ENCODE measurements at regions of chr14 and their contacts with region 1.

Region 1: DNA sequence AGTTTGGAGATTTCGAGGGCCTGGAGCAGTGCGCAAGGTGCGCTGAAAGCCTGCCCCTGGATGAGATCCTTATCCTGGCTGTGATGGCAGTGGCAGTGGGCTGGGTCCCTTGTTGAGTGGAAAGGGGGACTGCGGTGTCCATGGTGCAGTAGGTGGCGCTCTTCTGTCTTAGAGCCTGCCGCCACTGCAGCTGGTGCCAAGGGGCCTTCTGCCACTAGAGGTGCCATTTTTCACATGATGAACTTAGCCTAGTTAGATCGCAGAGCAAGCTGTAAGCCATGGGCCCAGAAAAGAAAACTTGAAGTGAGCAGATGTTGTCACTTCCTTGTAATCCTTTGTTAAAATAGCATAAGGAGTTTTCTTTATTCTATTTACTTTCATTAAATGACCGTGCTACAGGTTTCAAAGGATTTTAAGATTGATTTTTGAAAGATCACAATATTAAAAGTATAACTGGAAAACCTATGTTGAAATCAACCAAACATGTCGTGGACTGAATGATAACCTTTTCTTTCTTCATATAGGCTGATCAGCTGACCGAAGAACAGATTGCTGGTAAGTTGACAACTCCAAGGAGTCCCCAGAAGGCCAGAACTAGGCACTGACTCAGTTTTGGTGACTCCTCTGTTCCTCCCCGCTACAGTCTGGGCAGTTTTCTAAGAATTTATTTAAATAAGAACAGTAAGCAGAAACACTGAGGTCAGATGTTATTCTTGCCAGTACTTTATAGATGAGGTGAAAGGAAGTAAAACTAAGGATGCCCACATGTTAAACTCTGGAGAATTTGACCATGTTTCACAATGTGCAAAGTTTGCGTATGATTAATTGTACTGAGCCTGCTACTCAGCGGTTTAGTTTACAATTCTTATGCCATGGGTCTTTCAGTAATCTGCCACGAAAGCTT is 3.0 kb downstream of the CALM1 start:
- DNase-seq: peak; percentile 94
- ATAC-seq: peak; percentile 75

Region 2: DNA sequence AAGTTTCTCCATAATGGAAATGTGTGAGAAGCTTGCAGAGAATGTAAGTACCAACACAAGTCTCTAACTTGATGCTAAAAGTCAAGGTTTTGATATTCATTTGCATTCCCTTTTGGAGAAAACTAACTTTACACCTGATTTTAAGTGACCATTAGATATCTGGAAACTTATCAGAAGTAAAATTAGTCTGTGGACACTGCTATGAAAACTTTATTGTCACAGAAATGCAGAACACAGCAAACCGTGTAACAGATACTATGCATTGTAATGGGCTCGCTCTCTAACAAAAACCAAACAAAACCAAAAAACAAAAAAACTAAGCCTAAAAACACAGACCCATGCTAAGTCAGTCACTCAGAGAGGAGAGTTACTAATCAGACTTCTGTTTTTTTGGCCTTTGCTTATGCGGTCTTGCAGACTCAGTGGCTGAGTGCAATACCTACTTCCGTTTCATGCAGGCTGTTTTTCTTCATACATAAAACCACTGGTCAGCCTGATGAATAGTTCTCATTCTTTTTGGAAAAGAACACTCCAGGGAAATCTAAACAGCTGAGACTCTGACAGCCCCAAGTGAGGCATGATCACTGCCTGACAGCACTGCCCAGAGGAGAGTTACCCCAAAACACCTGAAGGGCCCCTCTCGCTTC is 103.8 kb before region 1 on chr14:
- intact Hi-C with region 1: loop called (anchors 5 kb)
- DNase-seq: no peak
- ATAC-seq: no peak

Region 3: DNA sequence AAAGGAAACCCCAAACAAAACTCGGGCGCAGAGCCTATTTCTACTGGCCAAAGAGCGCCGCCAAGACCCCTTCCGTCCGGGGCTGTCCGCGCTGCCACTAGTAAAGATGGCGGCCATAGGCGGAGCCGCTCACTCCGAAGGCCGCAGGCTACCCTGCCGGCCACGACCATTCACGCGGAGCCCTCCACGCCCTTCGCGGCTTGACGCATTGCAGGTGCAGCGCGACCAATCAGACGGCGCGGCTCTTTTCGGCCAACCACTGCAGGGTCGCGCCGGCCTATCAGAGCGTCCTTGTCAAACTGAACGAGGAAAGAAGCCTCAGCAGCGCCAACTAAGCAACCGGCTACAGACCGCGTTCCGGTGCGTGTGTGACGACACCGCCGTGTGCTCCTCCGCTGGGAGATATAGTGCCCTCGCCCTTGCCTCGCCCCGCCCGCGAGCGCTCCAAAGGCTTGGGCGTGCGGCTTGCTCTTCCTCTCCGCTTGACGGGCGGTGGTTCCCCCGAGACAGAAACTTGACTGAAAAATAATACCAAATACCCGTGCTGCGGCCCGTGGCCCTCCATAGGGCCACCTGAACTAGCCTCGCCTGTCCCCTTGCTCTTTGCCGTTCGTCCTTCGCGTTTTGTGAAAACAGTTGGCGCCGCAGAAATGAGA is 16.6 kb before region 1 on chr14:
- intact Hi-C with region 1: loop called (anchors 2 kb)
- DNase-seq: peak; percentile 100
- ATAC-seq: peak; percentile 93

Region 4: GRCh38 chr14:90518941-90519256 is 119.1 kb after region 1 on chr14:
- intact Hi-C with region 1: loop called (anchors 5 kb)
- DNase-seq: no peak
- ATAC-seq: no peak

Region 5: GRCh38 chr14:90697577-90698206 is 297.9 kb after region 1 on chr14:
- intact Hi-C with region 1: loop called (anchors 1 kb)
- DNase-seq: peak; percentile 89
- ATAC-seq: peak; percentile 95

Region 6: GRCh38 chr14:90815822-90816700 is 416.3 kb after region 1 on chr14 and contains the start of gene TTC7B:
- intact Hi-C with region 1: loop called (anchors 10 kb)
- DNase-seq: peak; percentile 70
- ATAC-seq: peak; percentile 88
- total RNA-seq, gene TTC7B: 60.3 TPM

Measured in Right ventricle myocardium superior (tissue), 1 donor.